AG04450 (cell line): ENCODE measurements at regions of chr21 and their contacts with region 1.

Region 1: DNA sequence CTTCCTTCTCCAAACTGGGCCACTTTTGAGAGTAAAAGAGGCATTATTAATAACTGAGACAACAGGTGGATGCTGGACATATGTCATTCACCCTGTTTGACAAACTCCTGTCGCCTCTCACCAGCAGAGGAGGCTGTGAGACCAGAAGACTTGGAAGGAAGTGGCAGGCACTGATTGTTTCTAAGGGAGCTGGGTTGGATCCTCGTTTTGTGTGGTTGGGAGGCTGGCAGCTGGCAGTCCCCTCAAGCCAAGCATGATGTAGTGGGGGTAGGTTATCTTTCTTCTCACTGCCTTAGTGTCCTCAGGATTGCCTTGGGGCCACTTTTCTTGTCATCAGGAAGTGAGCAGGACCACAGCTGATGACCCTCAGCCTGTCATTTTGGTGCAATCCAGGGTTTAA is 86.5 kb upstream of the KCNJ15 start:
- DNase-seq: no peak
- H3K4me3 ChIP-seq: no peak overlapping the region
- H3K27ac ChIP-seq: no peak overlapping the region
- H3K27me3 ChIP-seq: no peaks in the 10 kb centered on the region
- CTCF ChIP-seq: peak; percentile 43; the same call in 1 of the 2 replicates

Region 2: GRCh38 chr21:37939251-37939650 is 231.0 kb before region 1 on chr21:
- CTCF ChIA-PET with region 1: no interaction called
- POLR2A ChIA-PET with region 1: no interaction called
- DNase-seq: no peak
- H3K4me3 ChIP-seq: no peak overlapping the region
- H3K27ac ChIP-seq: no peak overlapping the region
- H3K27me3 ChIP-seq: peaks cover 2% of the 10 kb centered on the region
- CTCF ChIP-seq: no peak

Region 3: DNA sequence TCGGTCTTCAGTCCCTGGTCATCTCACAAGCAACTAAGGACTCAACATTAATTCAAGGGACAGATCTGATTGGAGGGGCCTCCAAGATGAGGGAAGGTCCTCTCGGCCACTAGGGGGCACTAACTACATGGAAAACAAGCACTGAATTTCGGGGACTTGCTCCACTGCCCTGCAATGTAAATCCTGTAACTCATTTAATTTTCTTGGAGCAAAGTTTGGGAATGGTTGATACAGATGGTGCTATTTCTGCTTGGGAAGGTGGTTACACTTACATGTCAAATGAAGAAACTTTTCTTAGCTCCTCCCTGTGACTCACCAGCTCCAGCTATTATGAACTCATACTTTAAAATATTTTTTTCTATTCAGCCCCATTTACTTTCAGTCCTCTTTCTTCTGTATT is 10.9 kb before region 1 on chr21:
- CTCF ChIA-PET with region 1: interaction called, 23 read pairs
- POLR2A ChIA-PET with region 1: no interaction called
- DNase-seq: peak; percentile 74
- H3K4me3 ChIP-seq: no peak overlapping the region
- H3K27ac ChIP-seq: no peak overlapping the region
- H3K27me3 ChIP-seq: peaks cover 8% of the 10 kb centered on the region
- CTCF ChIP-seq: peak; percentile 90

Region 4: DNA sequence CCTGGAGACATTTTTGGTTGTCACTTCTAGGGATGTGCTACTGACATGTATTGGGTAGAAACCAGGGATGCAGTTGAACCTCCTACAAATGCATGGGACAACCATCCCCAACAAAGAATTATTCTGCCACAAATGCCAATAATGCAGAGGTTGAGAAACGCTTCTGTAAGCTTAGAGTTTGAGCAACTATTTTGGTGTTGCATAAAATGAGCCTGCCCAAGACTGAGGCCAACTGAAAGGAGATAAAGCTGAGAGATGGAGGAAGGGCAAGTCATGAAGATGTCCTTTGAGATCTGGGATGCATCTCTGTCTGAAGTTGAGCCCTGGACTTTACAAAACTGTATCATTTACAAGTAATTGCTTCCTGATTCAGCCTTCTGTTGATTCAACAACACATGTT is 193.4 kb after region 1 on chr21:
- CTCF ChIA-PET with region 1: no interaction called
- POLR2A ChIA-PET with region 1: no interaction called
- DNase-seq: no peak
- H3K4me3 ChIP-seq: no peak overlapping the region
- H3K27ac ChIP-seq: no peak overlapping the region
- H3K27me3 ChIP-seq: peaks cover 3% of the 10 kb centered on the region
- CTCF ChIP-seq: no peak